GM13976 (cell line): ENCODE measurements at regions of chr15 and their contacts with region 1.

Region 1: GRCh38 chr15:56491110-56491722 is 26.3 kb upstream of the MNS1 start:
- DNase-seq: peak; percentile 71
- CTCF ChIP-seq: peak; percentile 85

Region 2: GRCh38 chr15:56353119-56353518 is 138.1 kb before region 1 on chr15:
- in situ Hi-C with region 1: no loop called
- DNase-seq: no peak
- CTCF ChIP-seq: no peak

Region 3: GRCh38 chr15:56871180-56871579 is 380.0 kb after region 1 on chr15:
- in situ Hi-C with region 1: loop called (anchors 10 kb)
- DNase-seq: no peak
- CTCF ChIP-seq: no peak

Region 4: GRCh38 chr15:57146506-57147201 is 655.4 kb after region 1 on chr15:
- in situ Hi-C with region 1: loop called (anchors 25 kb)
- DNase-seq: peak; percentile 28
- CTCF ChIP-seq: peak; percentile 44

Region 5: DNA sequence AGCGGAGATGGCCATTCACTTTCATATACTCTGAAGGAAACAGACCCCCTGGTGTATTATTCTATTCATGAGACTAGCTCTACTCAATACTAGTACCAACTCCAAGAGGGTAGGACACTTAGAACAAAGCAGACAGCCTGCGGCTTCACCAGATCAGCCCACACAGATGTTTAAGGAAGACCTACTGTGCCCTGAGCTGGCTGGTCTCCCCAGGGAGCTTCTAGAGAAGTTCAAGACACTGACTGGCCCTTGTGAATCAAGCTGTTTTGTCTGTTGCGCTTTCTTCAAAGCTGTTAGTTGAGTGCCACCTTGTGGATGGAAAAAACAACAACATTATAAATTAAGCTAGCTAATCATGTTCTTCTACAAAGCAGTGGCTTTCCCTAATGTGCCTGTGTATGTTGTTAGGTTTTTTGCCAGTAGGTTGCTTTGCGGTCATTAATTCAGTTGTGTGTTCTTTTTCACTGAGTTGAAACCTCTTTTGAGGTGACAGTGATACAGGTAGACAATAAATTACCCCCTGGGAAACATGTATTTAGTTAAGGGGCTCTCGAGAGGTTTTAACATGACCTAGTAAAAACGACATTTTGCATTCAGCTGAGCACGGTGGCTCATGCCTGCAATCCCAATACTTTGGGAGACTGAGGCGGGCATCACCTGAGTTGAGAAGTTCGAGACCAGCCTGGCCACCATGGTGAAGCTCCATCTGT is 1036.3 kb after region 1 on chr15:
- in situ Hi-C with region 1: loop called (anchors 25 kb)
- DNase-seq: peak; percentile 53
- CTCF ChIP-seq: peak; percentile 23